ENCODE measurements at regions of chr5 and their contacts with region 1.

Region 1: GRCh38 chr5:41527201-41527811 is 16.9 kb upstream of the PLCXD3 start:
- DNase-seq: peak; percentile 82 to 90
- H3K4me3 ChIP-seq: no peak overlapping the region
- H3K4me3 Mint-ChIP-seq: peak overlapping the region; percentile 46
- H3K27ac Mint-ChIP-seq: peak overlapping the region; percentile 78
- H3K4me1 ChIP-seq: peaks cover 43% of the 10 kb centered on the region
- H3K4me1 Mint-ChIP-seq: peaks cover 27% of the 10 kb centered on the region
- H3K27me3 ChIP-seq: no peaks in the 10 kb centered on the region
- H3K27me3 Mint-ChIP-seq: no peaks in the 10 kb centered on the region
- CTCF ChIP-seq: no peak

Region 2: GRCh38 chr5:40904205-40904993 is 622.9 kb before region 1 on chr5:
- CTCF ChIA-PET with region 1: no interaction called
- POLR2A ChIA-PET with region 1: no interaction called
- intact Hi-C with region 1: loop called (anchors 2 kb)
- DNase-seq: peak; percentile 57 to 61
- H3K4me3 ChIP-seq: no peak overlapping the region
- H3K4me3 Mint-ChIP-seq: no peak overlapping the region
- H3K27ac Mint-ChIP-seq: no peak overlapping the region
- H3K4me1 ChIP-seq: no peaks in the 10 kb centered on the region
- H3K4me1 Mint-ChIP-seq: peaks cover 9% of the 10 kb centered on the region
- H3K27me3 ChIP-seq: no peaks in the 10 kb centered on the region
- H3K27me3 Mint-ChIP-seq: peaks cover 5% of the 10 kb centered on the region
- CTCF ChIP-seq: peak; percentile 80 to 97

Region 3: DNA sequence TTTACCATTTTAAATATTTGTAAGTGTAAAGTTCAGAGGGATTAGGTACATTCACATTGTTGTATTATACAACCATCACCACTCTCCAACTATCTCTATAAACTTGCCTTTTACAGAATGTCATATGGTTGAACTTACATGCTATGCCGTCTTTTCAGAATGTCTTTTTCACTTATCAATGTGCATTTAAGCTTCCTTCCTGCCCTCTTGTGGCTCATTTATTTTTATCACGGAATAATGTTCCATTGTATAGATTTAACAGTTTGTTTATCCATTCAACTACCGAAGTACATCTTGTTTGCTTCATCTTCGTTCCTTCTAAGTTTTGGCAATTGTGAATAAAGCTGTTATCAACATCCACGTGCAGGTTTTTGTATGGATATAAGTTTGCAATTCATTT is 180.7 kb before region 1 on chr5:
- CTCF ChIA-PET with region 1: no interaction called
- POLR2A ChIA-PET with region 1: no interaction called
- intact Hi-C with region 1: loop called (anchors 2 kb)
- DNase-seq: no peak
- H3K4me3 ChIP-seq: no peak overlapping the region
- H3K4me3 Mint-ChIP-seq: no peak overlapping the region
- H3K27ac Mint-ChIP-seq: no peak overlapping the region
- H3K4me1 ChIP-seq: peaks cover 9% of the 10 kb centered on the region; the same call in 1 of the 2 replicates
- H3K4me1 Mint-ChIP-seq: peaks cover 6% of the 10 kb centered on the region
- H3K27me3 ChIP-seq: no peaks in the 10 kb centered on the region
- H3K27me3 Mint-ChIP-seq: peaks cover 8% of the 10 kb centered on the region
- CTCF ChIP-seq: no peak

Region 4: DNA sequence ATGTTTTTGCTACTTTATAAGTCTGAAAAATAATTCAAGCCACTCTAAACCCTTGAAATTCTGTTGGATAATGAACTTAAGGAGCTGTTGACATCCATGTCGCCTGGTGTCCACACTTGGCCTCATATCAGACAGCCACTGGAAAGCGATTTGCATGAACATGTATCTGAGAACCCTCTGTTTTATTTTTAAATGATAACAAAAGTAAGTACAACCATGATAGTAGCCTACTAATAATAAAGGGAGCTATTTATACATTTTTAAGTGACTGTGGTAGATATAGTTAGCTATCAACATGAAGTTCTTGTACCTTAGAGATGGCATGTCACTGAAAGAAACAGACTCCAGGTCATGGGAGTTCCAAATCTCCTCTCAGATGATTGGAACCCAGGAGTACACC is 70.2 kb before region 1 on chr5:
- CTCF ChIA-PET with region 1: no interaction called
- POLR2A ChIA-PET with region 1: no interaction called
- intact Hi-C with region 1: loop called (anchors 5 kb)
- DNase-seq: no peak
- H3K4me3 ChIP-seq: no peak overlapping the region
- H3K4me3 Mint-ChIP-seq: no peak overlapping the region
- H3K27ac Mint-ChIP-seq: no peak overlapping the region
- H3K4me1 ChIP-seq: peaks cover 12% of the 10 kb centered on the region; the same call in 1 of the 2 replicates
- H3K4me1 Mint-ChIP-seq: no peaks in the 10 kb centered on the region
- H3K27me3 ChIP-seq: no peaks in the 10 kb centered on the region
- H3K27me3 Mint-ChIP-seq: no peaks in the 10 kb centered on the region
- CTCF ChIP-seq: no peak

Region 5: GRCh38 chr5:41621420-41621819 is 94.1 kb after region 1 on chr5:
- CTCF ChIA-PET with region 1: no interaction called
- POLR2A ChIA-PET with region 1: no interaction called
- intact Hi-C with region 1: loop called (anchors 5 kb)
- DNase-seq: no peak
- H3K4me3 ChIP-seq: no peak overlapping the region
- H3K4me3 Mint-ChIP-seq: no peak overlapping the region
- H3K27ac Mint-ChIP-seq: no peak overlapping the region
- H3K4me1 ChIP-seq: no peaks in the 10 kb centered on the region
- H3K4me1 Mint-ChIP-seq: no peaks in the 10 kb centered on the region
- H3K27me3 ChIP-seq: no peaks in the 10 kb centered on the region
- H3K27me3 Mint-ChIP-seq: no peaks in the 10 kb centered on the region
- CTCF ChIP-seq: no peak